H1 (cell line): ENCODE measurements at regions of chr2 and their contacts with region 1.

Region 1: GRCh38 chr2:205872716-205873115 is 190.4 kb downstream of the NRP2 start:
- DNase-seq: no peak
- H3K4me3 ChIP-seq: no peak overlapping the region
- H3K27ac ChIP-seq: no peak overlapping the region
- H3K4me1 ChIP-seq: no peaks in the 10 kb centered on the region
- H3K27me3 ChIP-seq: no peaks in the 10 kb centered on the region
- CTCF ChIP-seq: no peak
- EP300 ChIP-seq: no peak
- POLR2A ChIP-seq: no peak
- RAD21 ChIP-seq: no peak

Region 2: GRCh38 chr2:205721057-205721449 is 151.7 kb before region 1 on chr2:
- CTCF ChIA-PET with region 1: no interaction called
- POLR2A ChIA-PET with region 1: no interaction called
- DNase-seq: no peak
- H3K4me3 ChIP-seq: peak overlapping the region in 2 of 4 experiments; percentile 14 to 20; a peak in 2 of 8 replicates
- H3K27ac ChIP-seq: peak overlapping the region; percentile 54; the same call in 1 of the 2 replicates
- H3K4me1 ChIP-seq: peaks cover 12 to 24% (median 21%) of the 10 kb centered on the region in 4 experiments
- H3K27me3 ChIP-seq: no peaks in the 10 kb centered on the region
- CTCF ChIP-seq: peak; percentile 6 to 60 (median 53)
- EP300 ChIP-seq: no peak
- POLR2A ChIP-seq: no peak
- RAD21 ChIP-seq: peak in 1 of 2 experiments; percentile 31; a peak in 2 of 4 replicates

Region 3: GRCh38 chr2:205885492-205886099 is 12.9 kb after region 1 on chr2:
- CTCF ChIA-PET with region 1: interaction called, 12 read pairs
- POLR2A ChIA-PET with region 1: no interaction called
- DNase-seq: peak; percentile 82 to 98
- H3K4me3 ChIP-seq: no peak overlapping the region
- H3K27ac ChIP-seq: no peak overlapping the region
- H3K4me1 ChIP-seq: peaks cover 0 to 5% (median 0%) of the 10 kb centered on the region in 4 experiments; a peak in 2 of 7 replicates
- H3K27me3 ChIP-seq: no peaks in the 10 kb centered on the region
- CTCF ChIP-seq: peak; percentile 85 to 99 (median 94)
- EP300 ChIP-seq: no peak
- POLR2A ChIP-seq: no peak
- RAD21 ChIP-seq: peak; percentile 98 to 99

Region 4: DNA sequence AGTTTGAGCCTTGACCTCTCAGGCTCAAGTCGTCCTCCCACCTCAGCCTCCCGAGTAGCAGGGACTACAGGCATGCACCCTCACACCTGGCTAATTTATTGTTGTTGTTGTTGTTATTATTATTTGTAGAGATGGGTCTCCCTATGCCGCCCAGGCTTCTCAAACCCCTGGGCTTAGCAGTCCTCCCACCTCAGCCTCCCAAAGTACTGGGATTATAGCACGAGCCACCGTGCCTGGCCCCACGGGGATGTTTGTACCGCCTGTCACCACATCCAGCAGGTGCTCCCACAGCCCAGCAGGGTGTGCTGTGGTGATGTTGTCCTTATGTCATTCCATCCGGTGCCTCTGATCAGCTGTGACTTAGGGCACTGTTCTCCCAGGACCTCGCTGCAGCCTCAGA is 30.9 kb after region 1 on chr2:
- CTCF ChIA-PET with region 1: no interaction called
- POLR2A ChIA-PET with region 1: no interaction called
- DNase-seq: no peak
- H3K4me3 ChIP-seq: no peak overlapping the region
- H3K27ac ChIP-seq: no peak overlapping the region
- H3K4me1 ChIP-seq: no peaks in the 10 kb centered on the region
- H3K27me3 ChIP-seq: no peaks in the 10 kb centered on the region
- CTCF ChIP-seq: peak; percentile 69 to 83 (median 70)
- EP300 ChIP-seq: no peak
- POLR2A ChIP-seq: no peak
- RAD21 ChIP-seq: peak; percentile 58 to 66